ENCODE measurements at regions of chr16 and their contacts with region 1.

Region 1: GRCh38 chr16:83441517-83441916 is 366.3 kb upstream of the HSBP1 start:
- DNase-seq: no peak
- ATAC-seq: peak in 3 of 8 donors; percentile 22 to 91 (median 52)
- H3K4me3 ChIP-seq: no peak overlapping the region
- H3K27ac ChIP-seq: peak overlapping the region in 1 of 10 donors; percentile 18
- H3K4me1 ChIP-seq: peaks cover 0 to 5% (median 0%) of the 10 kb centered on the region in 9 donors
- H3K27me3 ChIP-seq: no peaks in the 10 kb centered on the region
- CTCF ChIP-seq: peak in 1 of 9 donors; percentile 14

Region 2: DNA sequence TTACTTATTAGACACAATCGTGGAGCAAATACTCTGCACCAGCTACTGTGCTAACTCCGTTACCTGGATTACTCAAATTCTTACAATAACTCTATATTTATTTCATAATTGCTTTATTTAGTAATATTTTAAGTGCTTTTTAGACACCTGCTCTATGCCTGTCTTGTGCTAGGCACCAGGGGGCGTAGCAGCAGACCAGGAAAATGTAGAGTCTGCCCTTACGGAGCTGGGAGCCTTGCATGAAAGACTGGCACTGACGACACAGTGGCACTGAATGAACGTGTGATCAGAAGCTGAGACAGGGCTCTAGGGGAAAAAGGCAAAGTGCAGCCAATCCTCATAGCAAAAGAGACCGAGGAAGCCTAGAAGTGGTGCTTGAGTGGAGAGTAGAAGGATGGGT is 328.2 kb before region 1 on chr16:
- intact Hi-C with region 1: loop called in 3 of 10 experiments (anchors 10 kb)
- DNase-seq: no peak
- ATAC-seq: peak in 3 of 8 donors; percentile 55 to 70 (median 69)
- H3K4me3 ChIP-seq: no peak overlapping the region
- H3K27ac ChIP-seq: no peak overlapping the region
- H3K4me1 ChIP-seq: peaks cover 0 to 10% (median 0%) of the 10 kb centered on the region in 9 donors
- H3K27me3 ChIP-seq: no peaks in the 10 kb centered on the region
- CTCF ChIP-seq: peak in 8 of 9 donors; percentile 10 to 53 (median 37)

Region 3: GRCh38 chr16:83200005-83200779 is 241.3 kb before region 1 on chr16:
- intact Hi-C with region 1: loop called in 1 of 10 experiments (anchors 10 kb)
- DNase-seq: peak; percentile 5 to 11
- ATAC-seq: peak in 6 of 8 donors; percentile 55 to 70 (median 66)
- H3K4me3 ChIP-seq: no peak overlapping the region
- H3K27ac ChIP-seq: no peak overlapping the region
- H3K4me1 ChIP-seq: no peaks in the 10 kb centered on the region
- H3K27me3 ChIP-seq: no peaks in the 10 kb centered on the region
- CTCF ChIP-seq: peak in 8 of 9 donors; percentile 4 to 46 (median 34)

Region 4: DNA sequence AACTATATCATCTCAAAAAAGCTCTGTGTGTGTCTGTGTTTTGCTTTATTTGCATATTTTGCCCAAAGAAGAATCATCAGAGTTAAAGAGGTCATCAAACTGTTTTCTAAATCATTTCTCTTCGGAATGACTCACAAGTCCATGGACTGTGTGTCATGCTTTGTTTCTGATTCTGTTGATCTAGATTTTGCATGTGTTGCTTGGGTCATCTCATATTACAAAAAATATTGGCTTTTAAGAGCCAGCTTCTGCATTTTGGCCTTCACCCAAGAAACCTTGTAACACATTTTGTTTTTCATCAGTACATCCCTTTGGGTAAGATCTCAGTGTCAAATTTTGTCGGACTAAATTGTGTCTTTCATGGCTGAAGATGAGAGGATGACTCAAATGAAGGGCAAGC is 104.9 kb before region 1 on chr16:
- intact Hi-C with region 1: no loop called
- DNase-seq: no peak
- ATAC-seq: no peak
- H3K4me3 ChIP-seq: no peak overlapping the region
- H3K27ac ChIP-seq: no peak overlapping the region
- H3K4me1 ChIP-seq: peaks cover 0 to 7% (median 0%) of the 10 kb centered on the region in 9 donors
- H3K27me3 ChIP-seq: no peaks in the 10 kb centered on the region
- CTCF ChIP-seq: no peak

Region 5: DNA sequence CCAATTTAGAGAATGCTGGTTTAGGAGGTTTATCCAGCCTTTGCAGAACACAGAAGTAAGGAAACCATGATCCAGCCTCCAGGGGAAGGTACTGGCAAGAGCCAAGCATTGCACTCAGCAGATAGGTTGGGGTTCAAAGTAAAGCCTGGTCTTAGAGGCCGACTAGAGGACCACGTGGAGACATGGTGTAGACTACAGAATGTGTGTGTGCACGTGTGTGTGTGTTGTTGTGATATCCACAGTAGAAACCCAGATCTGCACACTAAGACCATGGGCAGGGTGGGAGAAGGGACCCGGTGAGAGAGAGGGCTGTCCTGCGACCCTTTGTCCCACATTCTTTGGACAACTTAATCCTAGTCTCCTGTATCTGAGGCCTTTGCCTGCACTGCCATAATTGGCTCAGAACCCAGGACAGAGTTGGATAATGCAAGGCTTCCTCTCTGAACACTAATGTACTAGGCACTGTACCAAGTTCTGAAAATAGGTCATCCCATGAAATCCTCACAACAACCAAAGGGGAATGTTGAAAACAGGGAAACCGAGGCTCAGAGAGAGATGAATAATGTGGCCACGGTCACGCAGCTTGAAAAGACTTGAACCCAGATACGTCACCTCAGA is 41.1 kb after region 1 on chr16:
- intact Hi-C with region 1: no loop called
- DNase-seq: no peak
- ATAC-seq: peak; percentile 59 to 93 (median 76)
- H3K4me3 ChIP-seq: no peak overlapping the region
- H3K27ac ChIP-seq: no peak overlapping the region
- H3K4me1 ChIP-seq: peaks cover 0 to 17% (median 0%) of the 10 kb centered on the region in 9 donors
- H3K27me3 ChIP-seq: no peaks in the 10 kb centered on the region
- CTCF ChIP-seq: no peak

Measured in heart right ventricle (tissue), 16 donors.